HCT116 (cell line): ENCODE measurements at regions of chr9 and their contacts with region 1.

Region 1: GRCh38 chr9:83714329-83714728 is 6.6 kb upstream of the UBQLN1 start:
- DNase-seq: no peak
- ATAC-seq: no peak
- H3K4me3 ChIP-seq: no peak overlapping the region
- H3K27ac ChIP-seq: no peak overlapping the region
- H3K4me1 ChIP-seq: no peaks in the 10 kb centered on the region
- H3K27me3 ChIP-seq: no peaks in the 10 kb centered on the region
- CTCF ChIP-seq: peak; percentile 6 to 53 (median 29); a peak in 2 of 6 replicates
- POLR2A ChIP-seq: no peak
- RAD21 ChIP-seq: peak; percentile 28; the same call in 1 of the 2 replicates

Region 2: GRCh38 chr9:83794051-83794450 is 79.7 kb after region 1 on chr9:
- CTCF ChIA-PET with region 1: no interaction called
- POLR2A ChIA-PET with region 1: no interaction called
- RAD21 ChIA-PET with region 1: no interaction called
- intact Hi-C with region 1: loop called (anchors 5 kb)
- DNase-seq: no peak
- ATAC-seq: no peak
- H3K4me3 ChIP-seq: no peak overlapping the region
- H3K27ac ChIP-seq: no peak overlapping the region
- H3K4me1 ChIP-seq: no peaks in the 10 kb centered on the region
- H3K27me3 ChIP-seq: no peaks in the 10 kb centered on the region
- CTCF ChIP-seq: no peak
- POLR2A ChIP-seq: no peak
- RAD21 ChIP-seq: no peak